ENCODE measurements at regions of chrX and their contacts with region 1.

Region 1: GRCh38 chrX:68196939-68197791 is 236.1 kb downstream of the OPHN1 start:
- DNase-seq: peak; percentile 57
- ATAC-seq: peak; percentile 75
- H3K4me3 ChIP-seq: no peak overlapping the region
- H3K27ac ChIP-seq: no peak overlapping the region
- H3K4me1 ChIP-seq: no peaks in the 10 kb centered on the region
- H3K27me3 ChIP-seq: no peaks in the 10 kb centered on the region; the same call in none of the 2 replicates
- CTCF ChIP-seq: peak; percentile 82
- POLR2A ChIP-seq: peak; percentile 41; the same call in 1 of the 2 replicates
- RAD21 ChIP-seq: peak; percentile 89

Region 2: GRCh38 chrX:68175562-68175961 is 21.6 kb before region 1 on chrX:
- CTCF ChIA-PET with region 1: no interaction called
- POLR2A ChIA-PET with region 1: no interaction called
- dilution Hi-C with region 1: no loop called
- in situ Hi-C with region 1: no loop called
- intact Hi-C with region 1: no loop called
- DNase-seq: peak; percentile 72
- ATAC-seq: peak; percentile 59
- H3K4me3 ChIP-seq: no peak overlapping the region
- H3K27ac ChIP-seq: no peak overlapping the region
- H3K4me1 ChIP-seq: 0 out of 2 replicates have a peak, but pooled peaks cover 2% of the 10 kb centered on the region
- H3K27me3 ChIP-seq: no peaks in the 10 kb centered on the region
- CTCF ChIP-seq: no peak
- POLR2A ChIP-seq: no peak
- RAD21 ChIP-seq: no peak

Region 3: GRCh38 chrX:68490599-68490998 is 293.4 kb after region 1 on chrX:
- CTCF ChIA-PET with region 1: interaction called, 6 read pairs
- POLR2A ChIA-PET with region 1: no interaction called
- dilution Hi-C with region 1: no loop called
- in situ Hi-C with region 1: loop called (anchors 10 kb)
- intact Hi-C with region 1: loop called (anchors 1 kb)
- DNase-seq: peak; percentile 14
- ATAC-seq: peak; percentile 88
- H3K4me3 ChIP-seq: no peak overlapping the region
- H3K27ac ChIP-seq: no peak overlapping the region
- H3K4me1 ChIP-seq: no peaks in the 10 kb centered on the region
- H3K27me3 ChIP-seq: peaks cover 3% of the 10 kb centered on the region
- CTCF ChIP-seq: peak; percentile 37
- POLR2A ChIP-seq: no peak
- RAD21 ChIP-seq: peak; percentile 31

Region 4: DNA sequence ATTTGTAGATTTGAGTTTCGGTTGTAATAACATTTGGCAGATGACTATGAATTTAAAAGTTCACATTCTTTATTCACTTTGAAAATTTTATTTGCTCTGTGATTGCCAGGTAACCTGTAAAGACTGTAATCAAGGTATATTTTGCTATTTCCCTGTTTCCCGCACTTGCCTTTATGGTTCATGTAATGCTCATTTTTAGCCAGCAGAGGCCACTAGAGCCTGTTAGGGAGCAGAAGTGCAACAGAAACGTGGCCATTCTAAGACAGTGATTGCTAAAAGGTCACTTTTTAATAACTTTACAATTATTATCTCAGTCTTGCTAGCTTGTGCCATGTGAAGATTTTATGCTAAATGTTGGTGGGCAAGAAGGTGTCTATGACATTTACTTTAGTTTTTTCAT is 314.1 kb after region 1 on chrX:
- CTCF ChIA-PET with region 1: interaction called, 7 read pairs
- POLR2A ChIA-PET with region 1: no interaction called
- dilution Hi-C with region 1: no loop called
- in situ Hi-C with region 1: no loop called
- intact Hi-C with region 1: loop called (anchors 1 kb)
- DNase-seq: peak; percentile 48
- ATAC-seq: peak; percentile 86
- H3K4me3 ChIP-seq: no peak overlapping the region
- H3K27ac ChIP-seq: no peak overlapping the region
- H3K4me1 ChIP-seq: no peaks in the 10 kb centered on the region
- H3K27me3 ChIP-seq: no peaks in the 10 kb centered on the region
- CTCF ChIP-seq: peak; percentile 77
- POLR2A ChIP-seq: no peak
- RAD21 ChIP-seq: peak; percentile 74

Region 5: GRCh38 chrX:68807818-68808217 is 610.7 kb after region 1 on chrX:
- CTCF ChIA-PET with region 1: no interaction called
- POLR2A ChIA-PET with region 1: no interaction called
- dilution Hi-C with region 1: no loop called
- in situ Hi-C with region 1: no loop called
- intact Hi-C with region 1: loop called (anchors 5 kb)
- DNase-seq: no peak
- ATAC-seq: 0 out of 2 replicates have a peak, but pooled peaks have one; percentile 27
- H3K4me3 ChIP-seq: no peak overlapping the region
- H3K27ac ChIP-seq: no peak overlapping the region
- H3K4me1 ChIP-seq: no peaks in the 10 kb centered on the region
- H3K27me3 ChIP-seq: peaks cover 18% of the 10 kb centered on the region
- CTCF ChIP-seq: peak; percentile 26
- POLR2A ChIP-seq: no peak
- RAD21 ChIP-seq: peak; percentile 29; the same call in 1 of the 2 replicates

Measured in IMR-90 (cell line).